ENCODE measurements at regions of chr3 and their contacts with region 1.

Region 1: DNA sequence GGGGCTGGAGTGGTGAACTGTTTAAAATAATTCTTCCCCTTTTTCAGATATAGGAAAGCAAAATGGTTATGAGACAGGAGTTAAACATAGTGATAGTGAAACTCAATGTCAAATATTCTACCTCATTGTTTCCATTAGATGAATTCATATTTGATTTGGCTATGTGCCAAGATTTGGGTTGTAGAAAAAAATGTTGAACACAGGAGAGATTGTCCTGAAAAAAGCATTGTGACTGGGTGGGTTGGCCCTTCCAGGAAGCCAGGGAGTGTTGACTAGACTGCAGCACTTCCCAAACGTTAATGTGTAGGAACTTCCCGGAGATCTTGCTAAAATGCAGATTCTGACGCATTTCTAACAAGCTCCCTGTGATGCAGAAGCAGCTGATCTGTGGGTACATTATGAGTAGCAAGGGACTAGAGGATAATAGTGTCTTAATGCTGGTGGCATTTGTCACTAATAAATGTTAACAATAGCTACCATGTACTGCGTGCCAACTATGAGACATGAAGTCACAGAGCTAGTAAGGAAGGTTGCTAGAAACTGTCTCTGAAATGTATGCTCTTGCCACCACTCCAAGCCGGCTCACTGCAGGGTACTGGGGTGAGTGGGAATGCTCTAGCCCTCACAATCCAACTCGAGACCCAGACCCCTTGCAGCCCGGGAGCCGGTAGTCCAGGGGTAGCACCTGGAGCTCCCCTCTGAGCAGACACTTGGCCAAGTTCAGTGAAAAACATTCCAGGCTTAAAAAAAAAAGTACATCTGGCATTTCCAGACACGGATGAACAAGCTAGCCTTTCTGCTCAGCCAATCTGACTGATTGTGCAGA is 120.6 kb downstream of the CD47 start:
- DNase-seq: peak in 1 of 2 donors; percentile 68
- ATAC-seq: peak; percentile 64
- H3K4me3 ChIP-seq: no peak overlapping the region
- H3K27ac ChIP-seq: no peak overlapping the region
- H3K4me1 ChIP-seq: peaks cover 0 to 2% of the 10 kb centered on the region in 2 donors
- H3K27me3 ChIP-seq: no peaks in the 10 kb centered on the region

Region 2: GRCh38 chr3:107904536-107905066 is 65.6 kb before region 1 on chr3:
- intact Hi-C with region 1: loop called in 1 of 2 experiments (anchors 10 kb)
- DNase-seq: no peak
- ATAC-seq: no peak
- H3K4me3 ChIP-seq: no peak overlapping the region
- H3K27ac ChIP-seq: peak overlapping the region in 1 of 2 donors; percentile 21
- H3K4me1 ChIP-seq: peaks cover 0 to 3% of the 10 kb centered on the region in 2 donors
- H3K27me3 ChIP-seq: no peaks in the 10 kb centered on the region

Region 3: GRCh38 chr3:107987036-107987947 is 17.1 kb after region 1 on chr3:
- intact Hi-C with region 1: loop called in 1 of 2 experiments (anchors 2 kb)
- DNase-seq: peak; percentile 88
- ATAC-seq: peak; percentile 86
- H3K4me3 ChIP-seq: no peak overlapping the region
- H3K27ac ChIP-seq: peak overlapping the region in 1 of 2 donors; percentile 28
- H3K4me1 ChIP-seq: peaks cover 2 to 4% of the 10 kb centered on the region in 2 donors
- H3K27me3 ChIP-seq: no peaks in the 10 kb centered on the region

Region 4: GRCh38 chr3:108100906-108101660 is 130.9 kb after region 1 on chr3:
- intact Hi-C with region 1: no loop called
- DNase-seq: no peak
- ATAC-seq: no peak
- H3K4me3 ChIP-seq: no peak overlapping the region
- H3K27ac ChIP-seq: no peak overlapping the region
- H3K4me1 ChIP-seq: no peaks in the 10 kb centered on the region
- H3K27me3 ChIP-seq: no peaks in the 10 kb centered on the region

Measured in aorta (tissue), 5 donors.